Heart right ventricle (tissue), 16 donors: ENCODE measurements at regions of chr6 and their contacts with region 1.

Region 1: GRCh38 chr6:74607934-74608333 is 597.9 kb downstream of the COL12A1 start:
- DNase-seq: no peak
- ATAC-seq: no peak
- H3K4me3 ChIP-seq: no peak overlapping the region
- H3K27ac ChIP-seq: no peak overlapping the region
- H3K4me1 ChIP-seq: peaks cover 0 to 19% (median 0%) of the 10 kb centered on the region in 9 donors
- H3K27me3 ChIP-seq: no peaks in the 10 kb centered on the region
- CTCF ChIP-seq: no peak

Region 2: GRCh38 chr6:74557236-74557635 is 50.7 kb before region 1 on chr6:
- intact Hi-C with region 1: loop called in 1 of 10 experiments (anchors 1 kb)
- DNase-seq: no peak
- ATAC-seq: no peak
- H3K4me3 ChIP-seq: no peak overlapping the region
- H3K27ac ChIP-seq: no peak overlapping the region
- H3K4me1 ChIP-seq: no peaks in the 10 kb centered on the region
- H3K27me3 ChIP-seq: no peaks in the 10 kb centered on the region
- CTCF ChIP-seq: no peak

Region 3: DNA sequence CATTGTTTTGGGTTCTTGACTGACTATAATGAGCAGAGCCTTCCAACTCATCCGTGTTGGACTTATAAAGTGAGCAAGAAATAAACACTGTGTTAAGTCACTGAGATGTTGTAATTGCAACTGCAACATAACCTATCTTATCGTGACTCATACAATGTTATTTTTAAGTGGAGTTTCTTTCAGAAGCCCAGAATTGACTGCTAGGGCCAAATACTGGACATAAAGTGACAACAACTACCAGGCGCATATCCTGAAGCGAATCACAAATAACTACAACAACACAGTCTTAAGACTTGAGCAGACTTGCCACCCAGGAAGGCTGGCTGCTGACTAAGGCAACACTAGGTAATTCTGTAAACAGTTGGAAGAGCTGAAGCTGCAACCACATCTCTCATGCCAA is 271.3 kb after region 1 on chr6:
- intact Hi-C with region 1: no loop called
- DNase-seq: no peak
- ATAC-seq: peak in 4 of 8 donors; percentile 25 to 79 (median 40)
- H3K4me3 ChIP-seq: no peak overlapping the region
- H3K27ac ChIP-seq: peak overlapping the region in 1 of 10 donors; percentile 30
- H3K4me1 ChIP-seq: no peaks in the 10 kb centered on the region
- H3K27me3 ChIP-seq: no peaks in the 10 kb centered on the region
- CTCF ChIP-seq: no peak